Naive thymus-derived CD4-positive, alpha-beta T cell (primary cell): ENCODE measurements at regions of chr22 and their contacts with region 1.

Region 1: DNA sequence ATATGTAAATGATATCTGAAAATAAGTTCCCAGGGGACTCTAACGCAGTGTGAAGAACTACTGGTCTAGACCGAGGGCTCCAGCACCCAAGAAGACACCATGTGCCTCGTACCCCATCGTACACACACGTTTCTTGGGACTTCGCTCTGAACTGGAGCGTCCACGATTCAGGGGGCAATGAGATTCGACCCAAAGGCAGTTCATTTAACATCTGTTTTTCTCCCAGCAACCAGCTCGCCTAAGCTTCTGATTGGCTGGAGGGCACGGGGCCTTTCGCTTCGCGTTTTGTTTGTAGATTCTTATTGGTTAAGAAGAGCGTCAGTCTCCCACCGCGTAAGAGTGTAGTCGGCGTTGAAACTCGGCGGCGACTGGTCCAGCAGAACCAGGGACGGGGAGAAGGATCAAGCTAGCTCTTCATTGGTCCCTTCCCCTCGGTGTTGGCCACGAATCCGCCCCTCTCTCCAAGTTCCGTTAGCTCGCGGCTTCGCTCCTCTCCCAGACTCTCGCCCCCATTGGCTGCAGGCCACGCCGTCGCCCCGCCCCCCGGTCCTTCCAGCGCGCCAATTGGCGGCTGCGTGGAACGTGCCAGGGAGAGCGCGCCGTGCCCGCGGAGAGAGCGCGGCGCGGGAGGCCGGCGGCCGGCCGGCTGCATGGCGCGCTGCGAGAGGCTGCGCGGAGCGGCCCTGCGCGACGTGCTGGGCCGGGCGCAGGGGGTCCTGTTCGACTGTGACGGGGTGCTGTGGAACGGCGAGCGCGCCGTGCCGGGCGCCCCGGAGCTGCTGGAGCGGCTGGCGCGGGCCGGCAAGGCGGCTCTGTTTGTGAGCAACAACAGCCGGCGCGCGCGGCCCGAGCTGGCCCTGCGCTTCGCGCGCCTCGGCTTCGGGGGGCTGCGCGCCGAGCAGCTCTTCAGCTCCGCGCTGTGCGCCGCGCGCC is at the start of gene PDXP:
- DNase-seq: peak; percentile 95 to 99 (median 98)
- ATAC-seq: peak; percentile 96
- H3K4me3 ChIP-seq: peak within 1 kb of the TSS; percentile 60
- H3K4me3 Mint-ChIP-seq: peak within 1 kb of the TSS; percentile 85 to 95 (median 89)
- H3K27ac ChIP-seq: peak within 1 kb of the TSS; percentile 75
- H3K27ac Mint-ChIP-seq: peak within 1 kb of the TSS; percentile 82 to 98 (median 91)
- H3K4me1 ChIP-seq: peaks cover 23 to 26% of the 10 kb centered on the region in 2 donors
- H3K4me1 Mint-ChIP-seq: peaks cover 27 to 45% (median 41%) of the 10 kb centered on the region in 7 donors
- H3K27me3 ChIP-seq: no peaks in the 10 kb centered on the region
- H3K27me3 Mint-ChIP-seq: no peaks in the 10 kb centered on the region
- total RNA-seq, gene PDXP: 3.9 to 27.4 (median 7.5) TPM

Region 2: DNA sequence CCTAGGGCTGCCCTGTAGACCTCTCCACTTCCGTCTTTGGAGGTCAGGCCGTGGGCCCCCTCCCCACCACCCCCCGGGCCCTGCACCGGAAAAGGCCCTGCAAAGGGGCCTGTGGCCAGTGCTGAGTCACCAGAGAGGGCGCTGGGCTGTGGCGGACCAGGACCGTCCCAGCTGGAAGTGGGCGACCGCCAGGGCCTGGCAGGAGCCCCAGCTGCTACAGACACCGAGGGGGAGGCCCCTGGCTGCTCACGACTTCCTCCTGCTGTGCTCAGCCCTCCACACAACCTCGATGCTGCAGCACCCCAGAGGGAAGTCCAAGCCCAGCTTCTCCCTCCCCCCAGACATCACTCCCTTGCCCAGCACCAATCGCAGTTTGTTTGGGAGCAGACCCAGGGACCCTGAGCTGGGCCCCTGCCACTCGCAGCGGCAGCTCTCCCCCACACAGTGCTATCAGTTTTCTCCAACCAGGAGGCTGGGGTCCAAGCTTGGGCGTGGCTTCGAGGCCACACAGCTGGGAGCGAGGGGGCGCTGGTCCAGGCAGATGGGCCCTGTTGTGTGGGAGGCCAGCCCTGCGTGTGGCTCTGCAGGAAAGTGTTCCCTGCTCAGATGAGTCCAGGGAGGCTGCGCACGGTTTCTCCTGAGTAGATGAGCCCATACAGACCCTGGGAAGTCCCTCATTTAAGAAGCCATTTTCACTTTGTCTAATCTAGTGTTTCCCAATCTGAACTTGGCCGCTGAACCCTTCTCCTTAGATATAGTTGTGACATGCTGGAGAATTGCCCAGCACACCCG is 24.6 kb before region 1 on chr22:
- CTCF ChIA-PET with region 1: interaction called, 5 read pairs
- POLR2A ChIA-PET with region 1: interaction called, 75 read pairs
- intact Hi-C with region 1: loop called (anchors 1 kb)
- DNase-seq: peak in 5 of 9 donors; percentile 25 to 68 (median 37)
- ATAC-seq: peak; percentile 81
- H3K4me3 ChIP-seq: peak overlapping the region; percentile 53
- H3K4me3 Mint-ChIP-seq: peak overlapping the region; percentile 18 to 80 (median 70)
- H3K27ac ChIP-seq: peak overlapping the region; percentile 71
- H3K27ac Mint-ChIP-seq: peak overlapping the region; percentile 86 to 98 (median 93)
- H3K4me1 ChIP-seq: peaks cover 55 to 72% of the 10 kb centered on the region in 2 donors
- H3K4me1 Mint-ChIP-seq: peaks cover 23 to 70% (median 64%) of the 10 kb centered on the region in 7 donors
- H3K27me3 ChIP-seq: no peaks in the 10 kb centered on the region
- H3K27me3 Mint-ChIP-seq: no peaks in the 10 kb centered on the region

Region 3: GRCh38 chr22:37643225-37643847 is 15.1 kb before region 1 on chr22:
- CTCF ChIA-PET with region 1: interaction called, 36 read pairs
- POLR2A ChIA-PET with region 1: interaction called, 75 read pairs
- intact Hi-C with region 1: loop called (anchors 1 kb)
- DNase-seq: peak; percentile 65 to 90 (median 81)
- ATAC-seq: peak; percentile 83
- H3K4me3 ChIP-seq: peak overlapping the region; percentile 45
- H3K4me3 Mint-ChIP-seq: peak overlapping the region; percentile 29 to 75 (median 55)
- H3K27ac ChIP-seq: peak overlapping the region; percentile 24
- H3K27ac Mint-ChIP-seq: peak overlapping the region; percentile 51 to 89 (median 74)
- H3K4me1 ChIP-seq: peaks cover 34 to 39% of the 10 kb centered on the region in 2 donors
- H3K4me1 Mint-ChIP-seq: peaks cover 12 to 47% (median 30%) of the 10 kb centered on the region in 7 donors
- H3K27me3 ChIP-seq: no peaks in the 10 kb centered on the region
- H3K27me3 Mint-ChIP-seq: no peaks in the 10 kb centered on the region

Region 4: GRCh38 chr22:37686002-37686982 is 27.9 kb after region 1 on chr22 and contains the start of gene NOL12:
- CTCF ChIA-PET with region 1: interaction called, 30 read pairs
- POLR2A ChIA-PET with region 1: interaction called, 41 read pairs
- intact Hi-C with region 1: loop called in 1 of 2 experiments (anchors 1 kb)
- DNase-seq: peak; percentile 63 to 82 (median 78)
- ATAC-seq: peak; percentile 91
- H3K4me3 ChIP-seq: peak within 1 kb of the TSS; percentile 82
- H3K4me3 Mint-ChIP-seq: peak within 1 kb of the TSS; percentile 93 to 98 (median 96)
- H3K27ac ChIP-seq: peak within 1 kb of the TSS; percentile 84
- H3K27ac Mint-ChIP-seq: peak within 1 kb of the TSS; percentile 88 to 99 (median 95)
- H3K4me1 ChIP-seq: peaks cover 18 to 22% of the 10 kb centered on the region in 2 donors
- H3K4me1 Mint-ChIP-seq: peaks cover 16 to 39% (median 33%) of the 10 kb centered on the region in 7 donors
- H3K27me3 ChIP-seq: no peaks in the 10 kb centered on the region
- H3K27me3 Mint-ChIP-seq: no peaks in the 10 kb centered on the region
- total RNA-seq, gene NOL12: 32.8 to 52.5 (median 45.3) TPM

Region 5: GRCh38 chr22:37696657-37697537 is 38.5 kb after region 1 on chr22 and contains the start of gene TRIOBP:
- CTCF ChIA-PET with region 1: no interaction called
- POLR2A ChIA-PET with region 1: interaction called, 3 read pairs
- intact Hi-C with region 1: loop called in 1 of 2 experiments (anchors 1 kb)
- DNase-seq: peak; percentile 73 to 95 (median 81)
- ATAC-seq: peak; percentile 100
- H3K4me3 ChIP-seq: no peak within 1 kb of the TSS
- H3K4me3 Mint-ChIP-seq: peak within 1 kb of the TSS in 9 of 10 donors; percentile 36 to 73 (median 69)
- H3K27ac ChIP-seq: no peak within 1 kb of the TSS
- H3K27ac Mint-ChIP-seq: peak within 1 kb of the TSS in 5 of 9 donors; percentile 12 to 83 (median 59)
- H3K4me1 ChIP-seq: peaks cover 0 to 14% of the 10 kb centered on the region in 2 donors
- H3K4me1 Mint-ChIP-seq: peaks cover 12 to 23% (median 15%) of the 10 kb centered on the region in 7 donors
- H3K27me3 ChIP-seq: no peaks in the 10 kb centered on the region
- H3K27me3 Mint-ChIP-seq: no peaks in the 10 kb centered on the region
- total RNA-seq, gene TRIOBP: 15.0 to 43.0 (median 25.7) TPM

Region 6: DNA sequence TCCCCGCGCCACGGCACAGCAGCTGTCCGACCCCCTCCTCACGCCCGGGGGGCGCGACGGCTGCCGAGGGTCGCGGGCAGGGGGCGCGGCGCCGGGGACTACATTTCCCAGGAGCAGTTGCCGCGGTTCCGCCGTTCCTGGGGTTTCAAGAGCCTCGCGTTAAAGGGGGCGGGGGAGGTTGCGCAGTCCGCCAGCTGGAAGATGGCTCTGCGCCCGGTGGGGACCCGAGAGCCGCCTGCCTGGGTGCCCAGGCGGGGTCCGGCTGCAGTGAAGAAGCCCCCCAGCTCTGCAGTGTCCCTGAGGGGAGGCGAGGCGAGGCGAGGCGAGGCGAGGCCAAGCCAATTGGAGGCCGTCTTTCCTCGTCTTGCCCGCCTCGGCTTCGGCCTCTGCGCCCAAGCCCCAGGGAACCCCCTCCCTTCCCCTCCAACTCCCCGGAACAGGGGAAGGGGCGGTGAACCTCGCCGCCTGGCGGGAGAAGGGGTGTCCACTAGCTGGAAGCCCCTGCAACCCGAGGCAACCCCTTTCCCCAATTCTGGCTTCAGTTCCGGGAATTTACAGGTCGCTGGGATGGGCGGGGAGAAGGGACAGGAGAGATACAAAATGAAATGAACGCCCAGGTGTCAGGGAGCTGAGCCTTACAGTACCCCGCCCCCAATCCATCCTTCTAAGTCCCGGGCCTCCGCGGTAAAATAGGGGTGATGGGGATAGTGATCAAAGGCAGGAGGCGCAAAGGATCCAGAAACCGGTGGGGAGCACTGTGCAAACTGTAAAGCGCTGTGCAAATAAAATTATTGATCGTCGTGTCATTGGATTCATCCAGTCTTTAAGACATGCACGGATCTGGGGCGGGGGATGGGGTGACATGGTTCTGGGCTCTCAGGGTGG is 144.2 kb after region 1 on chr22:
- CTCF ChIA-PET with region 1: no interaction called
- POLR2A ChIA-PET with region 1: no interaction called
- intact Hi-C with region 1: no loop called
- DNase-seq: peak in 1 of 9 donors; percentile 40
- ATAC-seq: peak; percentile 45
- H3K4me3 ChIP-seq: peak overlapping the region; percentile 64
- H3K4me3 Mint-ChIP-seq: peak overlapping the region; percentile 54 to 90 (median 82)
- H3K27ac ChIP-seq: peak overlapping the region; percentile 18
- H3K27ac Mint-ChIP-seq: peak overlapping the region in 6 of 9 donors; percentile 5 to 52 (median 10)
- H3K4me1 ChIP-seq: peaks cover 4 to 32% of the 10 kb centered on the region in 2 donors
- H3K4me1 Mint-ChIP-seq: peaks cover 15 to 42% (median 39%) of the 10 kb centered on the region in 7 donors
- H3K27me3 ChIP-seq: peaks cover 0 to 16% of the 10 kb centered on the region in 2 donors
- H3K27me3 Mint-ChIP-seq: peaks cover 4 to 49% (median 24%) of the 10 kb centered on the region in 5 donors

Region 7: GRCh38 chr22:37817705-37818408 is 159.5 kb after region 1 on chr22:
- CTCF ChIA-PET with region 1: no interaction called
- POLR2A ChIA-PET with region 1: no interaction called
- intact Hi-C with region 1: no loop called
- DNase-seq: peak; percentile 44 to 92 (median 72)
- ATAC-seq: peak; percentile 92
- H3K4me3 ChIP-seq: peak overlapping the region; percentile 61
- H3K4me3 Mint-ChIP-seq: peak overlapping the region in 9 of 10 donors; percentile 34 to 74 (median 52)
- H3K27ac ChIP-seq: no peak overlapping the region
- H3K27ac Mint-ChIP-seq: no peak overlapping the region
- H3K4me1 ChIP-seq: peaks cover 10% of the 10 kb centered on the region in 2 donors
- H3K4me1 Mint-ChIP-seq: peaks cover 0 to 16% (median 11%) of the 10 kb centered on the region in 7 donors
- H3K27me3 ChIP-seq: no peaks in the 10 kb centered on the region
- H3K27me3 Mint-ChIP-seq: peaks cover 9 to 33% (median 20%) of the 10 kb centered on the region in 5 donors

Region 8: DNA sequence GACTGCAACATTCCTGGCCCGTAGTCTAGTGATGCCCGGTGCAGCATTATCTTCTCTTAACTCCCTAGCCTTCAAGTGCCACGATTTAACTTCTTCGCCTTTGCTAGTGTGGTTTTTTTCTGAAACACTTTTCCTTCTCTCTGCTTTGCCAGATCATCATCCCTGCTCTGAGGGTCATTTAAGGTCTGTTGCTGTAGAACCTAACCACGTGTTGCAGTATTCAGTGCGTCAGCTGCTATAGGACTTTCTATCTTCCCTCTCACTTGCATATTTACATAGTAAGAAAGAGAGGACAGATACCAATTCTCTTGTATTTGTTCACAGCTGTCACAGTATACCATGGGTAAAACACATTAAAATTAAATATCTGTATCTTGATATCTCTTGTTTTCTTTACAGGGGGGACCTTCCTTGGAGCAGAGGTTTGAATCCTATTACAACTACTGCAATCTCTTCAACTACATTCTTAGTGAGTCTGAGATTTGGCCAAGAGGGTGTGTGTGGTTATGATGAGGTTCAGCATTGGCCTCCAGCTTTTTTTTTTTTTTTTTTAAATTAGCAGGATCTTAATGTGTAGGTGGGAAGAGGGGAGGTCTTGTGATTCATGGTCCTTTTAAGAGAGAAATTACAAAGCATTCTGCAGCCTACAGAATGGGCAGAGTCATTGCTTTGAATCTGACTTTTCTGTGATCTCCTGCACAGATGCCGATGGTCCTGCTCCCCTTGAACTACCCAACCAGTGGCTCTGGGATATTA is 204.3 kb after region 1 on chr22:
- CTCF ChIA-PET with region 1: interaction called, 4 read pairs
- POLR2A ChIA-PET with region 1: no interaction called
- intact Hi-C with region 1: loop called in 1 of 2 experiments (anchors 1 kb)
- DNase-seq: no peak
- ATAC-seq: no peak
- H3K4me3 ChIP-seq: no peak overlapping the region
- H3K4me3 Mint-ChIP-seq: no peak overlapping the region
- H3K27ac ChIP-seq: no peak overlapping the region
- H3K27ac Mint-ChIP-seq: peak overlapping the region in 3 of 9 donors; percentile 13 to 82 (median 76)
- H3K4me1 ChIP-seq: peaks cover 0 to 2% of the 10 kb centered on the region in 2 donors
- H3K4me1 Mint-ChIP-seq: peaks cover 5 to 10% (median 6%) of the 10 kb centered on the region in 7 donors
- H3K27me3 ChIP-seq: no peaks in the 10 kb centered on the region
- H3K27me3 Mint-ChIP-seq: no peaks in the 10 kb centered on the region

Region 9: GRCh38 chr22:37996515-37997246 is 338.3 kb after region 1 on chr22:
- CTCF ChIA-PET with region 1: no interaction called
- POLR2A ChIA-PET with region 1: no interaction called
- intact Hi-C with region 1: no loop called
- DNase-seq: no peak
- ATAC-seq: no peak
- H3K4me3 ChIP-seq: no peak overlapping the region
- H3K4me3 Mint-ChIP-seq: no peak overlapping the region
- H3K27ac ChIP-seq: no peak overlapping the region
- H3K27ac Mint-ChIP-seq: no peak overlapping the region
- H3K4me1 ChIP-seq: peaks cover 0 to 52% of the 10 kb centered on the region in 2 donors
- H3K4me1 Mint-ChIP-seq: peaks cover 0 to 26% (median 0%) of the 10 kb centered on the region in 7 donors
- H3K27me3 ChIP-seq: no peaks in the 10 kb centered on the region
- H3K27me3 Mint-ChIP-seq: no peaks in the 10 kb centered on the region